SK-N-SH (cell line): ENCODE measurements at regions of chr12 and their contacts with region 1.

Region 1: DNA sequence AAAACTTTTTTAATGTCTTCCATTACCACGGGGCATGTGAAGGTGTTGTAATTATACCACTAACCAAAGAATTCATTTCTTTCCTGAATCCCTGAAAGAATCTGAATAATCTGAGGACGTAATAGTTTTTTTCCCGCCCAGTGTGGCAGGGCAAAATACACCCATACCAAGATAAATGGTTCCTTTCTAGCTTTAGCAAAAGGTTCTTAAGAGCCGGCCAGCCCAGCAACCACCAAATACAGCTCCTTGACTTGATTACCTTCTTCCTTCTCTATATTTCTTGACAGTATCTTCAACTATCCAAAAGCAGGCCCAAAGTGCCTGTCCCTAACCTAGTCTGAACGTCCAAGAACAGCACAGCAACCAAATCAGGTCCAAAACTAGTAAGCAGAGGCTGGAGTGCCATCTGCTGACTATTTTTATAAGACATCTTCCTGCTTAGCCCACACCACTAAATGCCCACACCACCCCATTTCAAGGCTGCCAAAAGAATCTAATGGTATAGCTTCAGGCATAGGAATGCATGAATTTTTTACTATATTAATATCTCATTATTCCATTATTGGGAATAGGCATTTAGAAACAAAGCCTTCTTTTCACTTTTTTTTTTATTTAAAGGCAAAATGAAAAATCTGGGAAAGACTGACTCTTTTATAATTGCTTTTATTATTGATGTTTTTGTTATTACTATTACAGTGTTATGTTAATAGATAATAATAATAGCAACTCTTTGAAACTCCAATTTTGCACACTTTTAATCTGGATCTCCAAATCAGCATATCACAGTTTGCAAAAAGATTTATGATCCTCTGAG is 524.4 kb downstream of the MED13L start:
- DNase-seq: peak; percentile 55
- H3K4me3 ChIP-seq: no peak overlapping the region; a peak in 1 of 4 replicates
- H3K27ac ChIP-seq: peak overlapping the region in 1 of 2 experiments; percentile 43; a peak in 1 of 4 replicates
- H3K4me1 ChIP-seq: peaks cover 0 to 8% of the 10 kb centered on the region in 2 experiments; a peak in 1 of 4 replicates
- H3K27me3 ChIP-seq: no peaks in the 10 kb centered on the region; the same call in none of the 2 replicates
- CTCF ChIP-seq: peak; percentile 74
- EP300 ChIP-seq: no peak
- RAD21 ChIP-seq: peak; percentile 96

Region 2: DNA sequence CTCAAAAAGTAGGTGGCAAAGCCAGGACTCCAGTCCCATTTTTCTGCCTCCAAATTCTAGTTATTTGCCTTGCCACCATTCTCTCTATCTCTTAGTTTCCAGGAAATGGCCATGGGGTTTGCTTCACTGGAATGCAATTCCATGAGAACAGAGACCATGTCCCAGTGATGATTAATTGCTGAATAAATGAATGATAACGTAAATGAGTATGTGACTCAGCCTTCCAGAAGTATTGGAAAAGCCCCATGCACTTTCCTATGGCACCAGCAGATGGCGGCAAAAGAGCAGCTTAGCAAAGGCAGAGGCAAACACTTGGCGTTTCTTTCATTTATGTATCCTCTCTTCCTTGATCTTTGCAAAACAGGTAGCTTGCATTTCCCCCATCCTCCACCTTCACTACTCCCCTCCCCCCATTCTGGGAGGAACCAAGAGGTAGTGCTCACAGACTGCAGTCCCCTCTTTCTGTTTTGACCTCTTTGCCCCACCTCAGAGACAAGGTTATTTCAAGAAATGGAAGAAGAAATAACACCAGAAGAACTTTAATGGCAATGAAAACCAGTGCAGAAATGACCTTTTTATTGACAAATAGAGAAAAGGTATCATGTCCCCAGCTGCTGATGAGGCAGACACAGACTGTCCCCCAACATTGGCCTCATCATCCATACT is 1090.5 kb before region 1 on chr12:
- CTCF ChIA-PET with region 1: interaction called, 119 read pairs
- POLR2A ChIA-PET with region 1: no interaction called
- DNase-seq: peak; percentile 73
- H3K4me3 ChIP-seq: no peak overlapping the region
- H3K27ac ChIP-seq: no peak overlapping the region
- H3K4me1 ChIP-seq: no peaks in the 10 kb centered on the region
- H3K27me3 ChIP-seq: no peaks in the 10 kb centered on the region
- CTCF ChIP-seq: peak; percentile 94
- EP300 ChIP-seq: peak; percentile 32 to 47; a peak in 1 of 4 replicates
- RAD21 ChIP-seq: peak; percentile 96

Region 3: GRCh38 chr12:114668151-114668885 is 1084.8 kb before region 1 on chr12:
- CTCF ChIA-PET with region 1: interaction called, 119 read pairs
- POLR2A ChIA-PET with region 1: interaction called, 4 read pairs
- DNase-seq: peak; percentile 92
- H3K4me3 ChIP-seq: peak overlapping the region; percentile 59 to 77
- H3K27ac ChIP-seq: peak overlapping the region in 1 of 2 experiments; percentile 89; a peak in 3 of 4 replicates
- H3K4me1 ChIP-seq: peaks cover 0 to 27% of the 10 kb centered on the region in 2 experiments; a peak in 2 of 4 replicates
- H3K27me3 ChIP-seq: no peaks in the 10 kb centered on the region
- CTCF ChIP-seq: peak; percentile 62
- EP300 ChIP-seq: no peak
- RAD21 ChIP-seq: peak; percentile 86

Region 4: DNA sequence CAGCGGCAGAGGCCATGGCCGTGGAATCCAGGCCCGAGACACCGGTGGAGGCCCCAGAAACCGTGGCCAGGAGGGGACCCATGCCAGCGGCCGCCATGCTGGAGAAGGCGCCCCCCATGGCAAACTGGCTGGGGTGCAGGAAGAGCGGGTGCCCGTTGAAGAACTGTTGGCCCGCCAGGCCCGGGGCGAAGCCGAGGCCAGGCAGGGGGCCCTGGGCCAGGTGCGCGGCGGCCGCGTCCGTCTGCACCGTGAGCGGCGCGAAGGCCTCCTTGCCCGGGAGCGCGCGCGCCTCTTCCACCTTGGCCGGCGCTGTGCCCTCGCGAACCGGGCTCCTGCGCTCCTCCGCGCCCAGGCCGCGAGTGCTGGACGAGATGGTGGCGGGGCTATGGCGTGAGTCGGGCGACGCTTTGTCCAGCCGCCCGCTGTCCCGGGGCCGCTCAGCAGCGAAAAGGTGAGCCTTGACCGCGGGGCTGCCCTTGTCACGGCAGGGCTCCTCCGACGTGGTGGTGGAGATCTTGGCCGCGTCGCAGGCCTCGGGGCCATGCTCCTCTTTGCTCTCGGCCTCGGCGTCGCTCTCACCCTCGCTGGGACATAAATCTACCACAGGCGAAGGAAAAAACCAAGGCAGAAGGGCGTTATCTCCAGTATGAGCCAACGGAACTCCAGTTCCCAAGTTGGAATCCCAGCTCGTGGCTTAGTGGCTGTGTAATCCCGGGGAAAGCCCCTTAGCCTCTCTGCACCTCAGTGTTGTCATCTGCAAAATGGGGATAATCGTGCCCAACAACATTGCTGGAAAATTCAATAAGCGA is 1078.7 kb before region 1 on chr12:
- CTCF ChIA-PET with region 1: interaction called, 119 read pairs
- POLR2A ChIA-PET with region 1: interaction called, 4 read pairs
- DNase-seq: no peak
- H3K4me3 ChIP-seq: no peak overlapping the region
- H3K27ac ChIP-seq: peak overlapping the region in 1 of 2 experiments; percentile 96; a peak in 2 of 4 replicates
- H3K4me1 ChIP-seq: peaks cover 0 to 57% of the 10 kb centered on the region in 2 experiments; a peak in 2 of 4 replicates
- H3K27me3 ChIP-seq: no peaks in the 10 kb centered on the region
- CTCF ChIP-seq: no peak
- EP300 ChIP-seq: no peak
- RAD21 ChIP-seq: no peak

Region 5: GRCh38 chr12:115504306-115504901 is 248.7 kb before region 1 on chr12:
- CTCF ChIA-PET with region 1: no interaction called
- POLR2A ChIA-PET with region 1: no interaction called
- DNase-seq: no peak
- H3K4me3 ChIP-seq: no peak overlapping the region
- H3K27ac ChIP-seq: no peak overlapping the region
- H3K4me1 ChIP-seq: no peaks in the 10 kb centered on the region
- H3K27me3 ChIP-seq: no peaks in the 10 kb centered on the region; the same call in 1 of the 2 replicates
- CTCF ChIP-seq: no peak
- EP300 ChIP-seq: no peak
- RAD21 ChIP-seq: no peak

Region 6: GRCh38 chr12:115923851-115924250 is 170.7 kb after region 1 on chr12:
- CTCF ChIA-PET with region 1: no interaction called
- POLR2A ChIA-PET with region 1: no interaction called
- DNase-seq: no peak
- H3K4me3 ChIP-seq: no peak overlapping the region
- H3K27ac ChIP-seq: no peak overlapping the region
- H3K4me1 ChIP-seq: no peaks in the 10 kb centered on the region
- H3K27me3 ChIP-seq: no peaks in the 10 kb centered on the region
- CTCF ChIP-seq: no peak
- EP300 ChIP-seq: no peak
- RAD21 ChIP-seq: no peak